HepG2 (cell line): ENCODE measurements at regions of chr22 and their contacts with region 1.

Region 1: DNA sequence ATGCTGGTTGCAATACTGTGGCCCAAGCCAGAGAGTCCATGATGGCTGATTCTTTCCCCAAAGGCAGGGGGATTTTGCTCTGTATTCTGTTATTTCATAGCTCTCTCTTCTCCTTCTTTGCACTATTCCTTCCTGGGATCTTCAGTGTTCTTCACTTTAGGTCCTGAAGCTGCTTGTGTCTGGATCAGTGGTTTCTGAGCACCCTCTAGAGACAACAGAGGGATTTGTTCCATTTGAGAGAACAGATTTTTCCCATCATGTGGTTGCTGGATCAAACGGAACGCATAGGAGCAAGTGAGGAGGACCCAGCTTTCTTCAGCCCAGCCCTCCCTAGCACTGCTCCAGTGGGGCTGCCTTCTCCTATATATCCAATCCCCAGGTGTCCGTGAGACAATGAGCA is 68.7 kb upstream of the SYN3 start:
- DNase-seq: peak; percentile 39
- ATAC-seq: peak; percentile 47; the same call in 2 of the 3 replicates
- H3K4me3 ChIP-seq: no peak overlapping the region
- H3K27ac ChIP-seq: no peak overlapping the region
- H3K4me1 ChIP-seq: peaks cover 18% of the 10 kb centered on the region
- H3K27me3 ChIP-seq: peaks cover 0 to 33% of the 10 kb centered on the region in 2 experiments; a peak in 4 of 5 replicates
- CTCF ChIP-seq: peak; percentile 73
- EP300 ChIP-seq: no peak
- POLR2A ChIP-seq: no peak
- RAD21 ChIP-seq: no peak

Region 2: GRCh38 chr22:33012833-33013450 is 113.9 kb before region 1 on chr22:
- CTCF ChIA-PET with region 1: interaction called, 3 read pairs
- POLR2A ChIA-PET with region 1: no interaction called
- in situ Hi-C with region 1: loop called (anchors 5 kb)
- intact Hi-C with region 1: loop called (anchors 10 kb)
- DNase-seq: peak; percentile 17
- ATAC-seq: peak; percentile 71
- H3K4me3 ChIP-seq: no peak overlapping the region
- H3K27ac ChIP-seq: no peak overlapping the region
- H3K4me1 ChIP-seq: peaks cover 30% of the 10 kb centered on the region
- H3K27me3 ChIP-seq: no peaks in the 10 kb centered on the region
- CTCF ChIP-seq: peak; percentile 29
- EP300 ChIP-seq: no peak
- POLR2A ChIP-seq: no peak
- RAD21 ChIP-seq: no peak

Region 3: DNA sequence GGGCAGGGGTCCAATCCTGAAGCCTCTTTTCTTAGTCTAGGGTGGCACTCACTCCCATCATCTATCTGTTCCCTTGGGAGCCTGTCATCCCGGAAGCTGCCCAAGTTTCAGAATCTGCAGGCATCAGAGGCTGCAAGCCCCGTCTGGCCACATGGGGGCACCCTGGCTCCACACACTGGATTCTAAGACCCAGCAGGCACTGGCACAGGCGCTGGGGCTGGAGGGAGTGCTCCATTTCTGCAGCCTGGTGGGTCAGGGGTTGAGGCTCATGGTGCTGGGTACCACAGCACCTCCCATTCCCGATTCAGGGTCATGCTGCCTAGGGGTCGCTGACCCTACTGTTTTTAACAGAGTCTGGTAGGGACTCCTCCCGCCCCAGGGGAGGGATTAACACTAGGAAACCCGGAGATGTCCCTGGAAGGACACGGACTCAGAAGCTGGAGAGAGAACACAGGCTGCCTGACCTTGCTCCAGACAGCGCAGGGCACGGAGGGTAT is 175.2 kb after region 1 on chr22:
- CTCF ChIA-PET with region 1: no interaction called
- POLR2A ChIA-PET with region 1: no interaction called
- in situ Hi-C with region 1: no loop called
- intact Hi-C with region 1: no loop called
- DNase-seq: peak; percentile 66
- ATAC-seq: peak; percentile 97
- H3K4me3 ChIP-seq: no peak overlapping the region
- H3K27ac ChIP-seq: peak overlapping the region; percentile 6
- H3K4me1 ChIP-seq: peaks cover 22% of the 10 kb centered on the region
- H3K27me3 ChIP-seq: no peaks in the 10 kb centered on the region
- CTCF ChIP-seq: peak; percentile 99
- EP300 ChIP-seq: no peak; a peak in 1 of 4 replicates
- POLR2A ChIP-seq: no peak
- RAD21 ChIP-seq: peak; percentile 99